ENCODE measurements at regions of chr14 and their contacts with region 1.

Region 1: DNA sequence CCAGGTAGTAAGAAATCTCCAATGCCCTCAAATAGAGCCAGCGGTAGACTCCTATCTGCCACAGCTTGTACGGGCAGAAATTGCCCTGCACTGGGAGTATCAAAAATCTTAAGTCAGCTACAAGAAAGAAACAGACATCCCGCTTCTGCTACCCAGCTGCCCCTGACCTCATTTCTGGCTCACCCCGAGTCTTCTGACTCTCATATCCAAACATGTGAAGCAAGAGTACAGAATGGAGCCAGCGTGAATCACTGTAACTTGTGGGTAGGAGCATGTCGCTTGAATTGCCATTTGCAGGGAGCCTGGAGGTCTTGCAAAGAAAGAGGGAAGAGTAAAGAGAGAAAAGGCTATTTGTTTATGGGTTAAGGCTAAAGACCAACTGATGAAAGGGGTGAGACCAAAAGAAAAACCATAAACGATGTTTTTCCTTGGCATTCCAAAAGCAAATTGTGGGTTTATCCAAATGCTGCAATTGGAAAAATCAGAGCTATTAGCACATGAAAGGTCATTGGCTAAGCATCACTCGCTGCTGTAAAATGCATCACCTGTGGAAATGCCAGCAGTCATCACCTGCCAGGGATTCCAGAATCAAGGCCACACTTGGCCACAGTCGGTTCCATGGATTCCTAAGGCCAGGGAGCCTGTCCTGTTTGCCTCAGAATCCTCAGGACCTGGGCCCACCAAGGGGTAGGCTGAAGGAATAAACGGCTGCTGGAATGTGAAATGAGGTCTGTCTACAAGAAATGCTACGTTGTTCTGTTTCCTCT is 86.6 kb downstream of the FOXN3 start:
- DNase-seq: no peak
- ATAC-seq: no peak
- H3K4me3 ChIP-seq: no peak overlapping the region
- H3K27ac ChIP-seq: no peak overlapping the region
- H3K4me1 ChIP-seq: no peaks in the 10 kb centered on the region
- H3K27me3 ChIP-seq: no peaks in the 10 kb centered on the region
- CTCF ChIP-seq: no peak

Region 2: GRCh38 chr14:89139404-89140247 is 190.8 kb before region 1 on chr14:
- CTCF ChIA-PET with region 1: no interaction called
- POLR2A ChIA-PET with region 1: no interaction called
- in situ Hi-C with region 1: no loop called
- intact Hi-C with region 1: loop called (anchors 10 kb)
- DNase-seq: no peak
- ATAC-seq: no peak
- H3K4me3 ChIP-seq: no peak overlapping the region
- H3K27ac ChIP-seq: no peak overlapping the region
- H3K4me1 ChIP-seq: no peaks in the 10 kb centered on the region
- H3K27me3 ChIP-seq: no peaks in the 10 kb centered on the region
- CTCF ChIP-seq: no peak

Region 3: DNA sequence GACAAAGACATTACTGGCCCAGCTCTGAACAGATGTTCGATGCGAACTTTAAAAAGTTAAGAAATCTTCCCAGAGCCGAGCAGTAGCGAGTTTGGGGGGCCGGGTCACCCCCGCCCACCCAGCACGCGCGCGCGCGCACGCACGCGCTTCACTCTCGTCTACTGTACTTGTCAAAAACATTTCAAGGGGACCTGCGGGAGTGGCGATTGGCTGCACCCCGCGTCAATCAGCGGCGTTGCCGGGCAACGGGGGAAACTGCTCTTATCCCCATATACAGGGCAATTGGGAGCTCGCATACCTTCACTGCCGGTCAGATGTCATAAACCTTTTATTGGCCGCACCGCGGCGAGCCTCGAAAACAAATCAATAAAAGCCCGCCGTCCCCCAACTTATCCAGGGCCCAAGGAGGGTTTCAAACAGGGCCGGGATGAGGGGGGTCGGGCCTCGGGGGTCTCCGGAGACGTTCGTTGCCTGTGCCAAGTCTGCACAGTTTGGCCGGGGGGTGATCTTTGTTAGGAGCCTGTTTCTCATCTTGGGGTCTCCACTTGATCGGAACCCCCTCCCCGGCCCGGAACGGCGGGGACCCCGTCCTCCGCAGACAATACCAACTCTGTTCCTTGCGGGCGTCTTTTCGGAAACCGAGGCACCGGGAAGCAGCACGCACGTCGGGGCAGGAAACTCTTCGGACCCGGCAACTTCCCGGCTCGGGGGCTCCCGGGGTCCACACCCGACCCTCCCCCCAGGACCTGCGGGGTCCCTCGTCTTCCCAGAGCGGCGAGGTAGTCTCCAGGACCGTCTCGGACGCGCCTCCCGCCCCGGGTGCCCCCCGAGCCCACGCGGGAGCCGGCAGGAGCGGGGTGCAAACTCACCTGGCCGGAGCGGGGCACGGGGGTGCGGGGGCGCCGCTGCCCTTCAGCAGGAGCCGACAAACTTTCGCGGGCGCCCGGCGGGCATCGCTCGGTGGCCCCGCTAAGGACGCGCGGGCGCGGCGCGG is 85.9 kb after region 1 on chr14:
- CTCF ChIA-PET with region 1: no interaction called
- POLR2A ChIA-PET with region 1: no interaction called
- in situ Hi-C with region 1: no loop called
- intact Hi-C with region 1: no loop called
- DNase-seq: peak; percentile 78
- ATAC-seq: peak; percentile 95
- H3K4me3 ChIP-seq: peak overlapping the region; percentile 58 to 71
- H3K27ac ChIP-seq: no peak overlapping the region
- H3K4me1 ChIP-seq: no peaks in the 10 kb centered on the region
- H3K27me3 ChIP-seq: no peaks in the 10 kb centered on the region
- CTCF ChIP-seq: no peak

Region 4: GRCh38 chr14:89455412-89455811 is 125.0 kb after region 1 on chr14:
- CTCF ChIA-PET with region 1: no interaction called
- POLR2A ChIA-PET with region 1: no interaction called
- in situ Hi-C with region 1: no loop called
- intact Hi-C with region 1: no loop called
- DNase-seq: no peak
- ATAC-seq: no peak
- H3K4me3 ChIP-seq: no peak overlapping the region
- H3K27ac ChIP-seq: no peak overlapping the region
- H3K4me1 ChIP-seq: no peaks in the 10 kb centered on the region
- H3K27me3 ChIP-seq: no peaks in the 10 kb centered on the region
- CTCF ChIP-seq: no peak

Measured in Panc1 (cell line).